RWPE1 (cell line): ENCODE measurements at regions of chr6 and their contacts with region 1.

Region 1: GRCh38 chr6:32868257-32868788 is 14.3 kb downstream of the PSMB9 start:
- DNase-seq: peak; percentile 60
- H3K27ac ChIP-seq: no peak overlapping the region
- CTCF ChIP-seq: peak; percentile 83

Region 2: DNA sequence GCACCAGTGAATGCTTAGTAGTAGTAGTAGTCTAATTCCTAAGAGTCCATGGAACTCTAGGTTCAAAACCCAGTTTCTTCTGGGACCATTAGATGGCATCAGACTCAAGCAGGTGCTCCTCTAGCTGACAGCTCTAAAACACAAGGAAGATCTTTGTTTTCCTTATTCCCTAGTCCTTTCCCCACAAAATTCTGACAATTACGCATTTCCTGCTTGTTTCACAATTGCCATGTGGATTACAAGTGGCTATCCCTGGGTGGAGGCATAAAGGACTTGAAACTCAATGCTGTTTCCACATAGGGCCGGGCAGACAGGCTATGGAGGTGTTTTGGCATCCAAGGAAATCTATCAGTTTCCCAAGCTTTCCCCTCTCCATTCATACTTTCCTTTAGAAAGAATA is 42.4 kb before region 1 on chr6:
- CTCF ChIA-PET with region 1: interaction called, 14 read pairs
- POLR2A ChIA-PET with region 1: no interaction called
- DNase-seq: no peak
- H3K27ac ChIP-seq: no peak overlapping the region
- CTCF ChIP-seq: peak; percentile 38; the same call in 1 of the 2 replicates

Region 3: DNA sequence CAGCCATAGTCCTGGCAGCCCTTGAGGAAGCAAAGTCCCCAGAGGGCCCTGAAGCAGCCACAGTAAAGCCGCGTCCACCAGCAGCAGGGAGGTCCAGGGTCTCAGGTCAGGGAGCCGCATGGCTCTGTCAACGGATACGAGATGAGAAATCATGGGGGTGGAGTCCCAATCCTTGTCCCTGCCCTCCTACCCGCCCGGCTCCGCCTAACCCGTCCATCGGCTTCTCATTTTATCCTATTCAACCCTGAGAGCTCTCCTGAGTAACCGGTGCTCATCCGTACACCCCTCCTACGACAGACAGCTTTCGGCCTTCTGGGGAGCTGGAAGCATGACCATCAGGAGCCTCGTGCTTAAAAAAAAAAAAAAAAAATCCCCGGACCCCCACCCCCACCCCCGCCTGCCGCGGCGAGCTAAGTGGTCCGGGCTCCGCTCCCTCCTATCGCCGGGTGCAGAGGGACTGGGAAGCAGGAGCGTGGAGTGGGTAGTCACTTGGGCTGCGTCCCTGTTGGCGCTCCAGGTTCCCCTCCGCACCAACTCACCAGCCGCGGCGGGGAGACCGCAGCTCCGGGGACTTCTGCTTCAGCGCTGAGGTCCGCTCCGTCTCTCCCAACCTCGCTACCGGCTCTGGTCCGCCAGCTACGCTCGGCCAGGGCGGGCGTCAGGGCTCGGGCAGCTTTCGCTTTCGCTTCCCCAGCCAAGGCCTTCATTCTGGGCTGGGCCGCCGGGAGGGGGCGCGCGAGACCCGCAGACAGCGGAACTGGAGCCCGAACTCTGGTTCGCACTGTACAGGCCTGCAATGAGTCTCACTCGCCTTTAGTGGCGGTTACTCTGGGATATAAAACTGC is 30.0 kb before region 1 on chr6 and contains the start of gene TAP2:
- CTCF ChIA-PET with region 1: interaction called, 48 read pairs
- POLR2A ChIA-PET with region 1: interaction called, 10 read pairs
- DNase-seq: peak; percentile 95
- H3K27ac ChIP-seq: peak within 1 kb of the TSS; percentile 85
- CTCF ChIP-seq: peak; percentile 94

Region 4: DNA sequence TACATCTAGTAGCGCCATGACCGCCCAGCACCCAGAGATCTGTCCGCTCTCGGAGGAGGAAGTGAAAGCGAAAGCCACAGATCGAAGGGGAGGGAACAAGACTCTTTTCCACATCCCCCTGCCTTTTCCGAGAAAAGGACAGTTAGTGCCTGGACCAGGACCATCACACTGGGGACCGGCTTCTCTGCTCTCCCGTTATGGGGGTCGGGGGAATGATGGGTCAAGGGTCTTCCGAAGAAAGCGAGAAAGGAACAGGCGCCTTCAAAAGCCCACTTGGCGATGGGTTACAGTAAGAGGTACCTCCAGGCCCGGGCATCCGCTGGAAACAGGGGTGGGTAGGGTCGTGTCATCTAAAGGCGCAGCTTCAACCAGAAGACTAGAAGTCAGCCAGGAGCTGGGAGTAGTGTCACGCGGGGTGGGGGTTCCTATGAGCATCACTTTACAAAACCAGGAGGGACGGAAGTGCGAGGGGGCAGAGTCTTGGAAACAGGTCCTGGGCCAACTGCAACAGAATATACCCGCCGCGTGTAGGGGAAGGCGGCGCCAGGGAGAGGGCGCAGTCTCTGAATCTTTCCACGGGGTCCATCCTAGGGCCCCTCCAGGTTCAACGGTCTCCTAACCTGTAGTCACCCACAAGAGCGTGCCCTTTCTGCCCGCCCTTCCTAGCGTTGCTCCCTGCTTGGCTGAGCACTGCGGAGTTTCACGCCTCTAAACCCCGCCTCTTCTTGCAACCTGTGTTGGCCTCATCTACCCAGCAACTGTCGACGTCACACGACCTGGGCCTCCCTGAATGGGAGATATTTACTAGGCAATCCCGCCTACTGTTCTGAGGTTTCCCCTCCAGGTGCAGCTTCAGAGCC is 24.1 kb before region 1 on chr6 and contains the start of gene PSMB8:
- CTCF ChIA-PET with region 1: interaction called, 48 read pairs
- POLR2A ChIA-PET with region 1: no interaction called
- DNase-seq: peak; percentile 94
- H3K27ac ChIP-seq: peak within 1 kb of the TSS; percentile 85
- CTCF ChIP-seq: no peak

Region 5: DNA sequence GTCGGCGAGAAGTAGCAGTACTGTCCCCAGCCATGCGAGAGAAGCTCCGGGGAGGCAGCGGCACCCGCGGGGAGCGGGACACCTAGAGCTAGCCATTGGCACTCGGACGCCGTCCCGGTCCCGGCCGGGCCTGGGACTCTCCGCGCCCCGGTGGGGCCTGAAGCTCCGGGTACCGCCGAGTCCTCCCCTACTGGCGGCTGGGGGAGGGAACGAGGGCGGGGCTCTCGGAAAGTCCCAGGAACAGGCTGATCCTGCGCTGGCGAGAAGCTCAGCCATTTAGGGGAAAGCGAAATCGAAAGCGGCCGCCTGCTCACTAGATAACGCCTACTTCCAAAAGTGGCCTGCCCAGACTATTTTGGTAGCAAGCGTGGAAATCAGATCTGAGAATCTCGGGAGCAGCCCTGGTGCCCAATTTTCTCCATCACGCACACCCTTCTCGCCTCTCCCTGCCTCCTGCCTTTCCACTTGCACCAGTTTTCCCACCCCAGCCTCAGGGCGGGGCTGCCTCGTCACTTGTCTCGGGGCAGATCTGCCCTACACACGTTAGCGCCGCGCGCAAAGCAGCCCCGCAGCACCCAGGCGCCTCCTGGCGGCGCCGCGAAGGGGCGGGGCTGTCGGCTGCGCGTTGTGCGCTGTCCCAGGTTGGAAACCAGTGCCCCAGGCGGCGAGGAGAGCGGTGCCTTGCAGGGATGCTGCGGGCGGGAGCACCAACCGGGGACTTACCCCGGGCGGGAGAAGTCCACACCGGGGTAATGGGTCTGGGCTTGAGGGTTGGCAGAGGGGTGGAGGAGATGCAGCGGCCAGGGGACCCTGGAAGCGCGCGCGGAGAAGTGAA is 14.6 kb before region 1 on chr6 and contains the starts of genes PSMB9 and TAP1:
- CTCF ChIA-PET with region 1: interaction called, 25 read pairs
- POLR2A ChIA-PET with region 1: no interaction called
- DNase-seq: peak; percentile 93
- H3K27ac ChIP-seq: peak within 1 kb of the TSS; percentile 96
- CTCF ChIP-seq: peak; percentile 86